ENCODE measurements at regions of chr13 and their contacts with region 1.

Region 1: DNA sequence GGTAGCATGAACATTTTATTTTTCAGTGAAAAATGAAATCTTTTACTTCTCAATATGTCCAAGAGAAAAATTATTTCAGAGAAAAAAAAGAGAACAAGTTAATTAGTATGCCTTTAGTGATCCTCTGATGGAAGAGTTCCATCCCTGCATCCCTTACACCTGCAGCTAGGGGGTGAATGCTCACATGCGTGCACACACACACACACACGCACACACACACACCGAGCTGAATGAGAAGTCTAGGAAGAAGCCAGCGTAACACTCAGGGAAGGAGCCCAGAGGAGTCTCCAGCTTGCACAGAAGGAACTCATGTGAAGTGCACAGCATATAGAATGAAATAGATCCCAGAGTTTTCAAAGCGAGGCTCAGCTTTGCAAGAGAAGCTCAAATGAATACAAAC is 510.5 kb downstream of the IRS2 start:
- DNase-seq: peak; percentile 41
- H3K4me3 Mint-ChIP-seq: no peak overlapping the region
- H3K27ac Mint-ChIP-seq: no peak overlapping the region
- H3K4me1 Mint-ChIP-seq: peaks cover 15% of the 10 kb centered on the region
- H3K27me3 Mint-ChIP-seq: no peaks in the 10 kb centered on the region
- CTCF ChIP-seq: no peak

Region 2: GRCh38 chr13:109058082-109058481 is 217.8 kb before region 1 on chr13:
- CTCF ChIA-PET with region 1: no interaction called
- POLR2A ChIA-PET with region 1: no interaction called
- intact Hi-C with region 1: no loop called
- DNase-seq: no peak
- H3K4me3 Mint-ChIP-seq: no peak overlapping the region
- H3K27ac Mint-ChIP-seq: no peak overlapping the region
- H3K4me1 Mint-ChIP-seq: no peaks in the 10 kb centered on the region
- H3K27me3 Mint-ChIP-seq: no peaks in the 10 kb centered on the region
- CTCF ChIP-seq: no peak

Region 3: GRCh38 chr13:109151255-109151654 is 124.6 kb before region 1 on chr13:
- CTCF ChIA-PET with region 1: interaction called, 4 read pairs
- POLR2A ChIA-PET with region 1: interaction called, 41 read pairs
- intact Hi-C with region 1: loop called (anchors 5 kb)
- DNase-seq: peak; percentile 49
- H3K4me3 Mint-ChIP-seq: no peak overlapping the region
- H3K27ac Mint-ChIP-seq: peak overlapping the region; percentile 77
- H3K4me1 Mint-ChIP-seq: peaks cover 57% of the 10 kb centered on the region
- H3K27me3 Mint-ChIP-seq: no peaks in the 10 kb centered on the region
- CTCF ChIP-seq: no peak

Region 4: GRCh38 chr13:109256866-109257760 is 18.7 kb before region 1 on chr13:
- CTCF ChIA-PET with region 1: interaction called, 3 read pairs
- POLR2A ChIA-PET with region 1: interaction called, 37 read pairs
- intact Hi-C with region 1: no loop called
- DNase-seq: peak; percentile 99
- H3K4me3 Mint-ChIP-seq: peak overlapping the region; percentile 48
- H3K27ac Mint-ChIP-seq: peak overlapping the region; percentile 96
- H3K4me1 Mint-ChIP-seq: peaks cover 47% of the 10 kb centered on the region
- H3K27me3 Mint-ChIP-seq: no peaks in the 10 kb centered on the region
- CTCF ChIP-seq: no peak

Region 5: GRCh38 chr13:109309625-109310363 is 33.9 kb after region 1 on chr13:
- CTCF ChIA-PET with region 1: no interaction called
- POLR2A ChIA-PET with region 1: no interaction called
- intact Hi-C with region 1: no loop called
- DNase-seq: no peak
- H3K4me3 Mint-ChIP-seq: no peak overlapping the region
- H3K27ac Mint-ChIP-seq: no peak overlapping the region
- H3K4me1 Mint-ChIP-seq: no peaks in the 10 kb centered on the region
- H3K27me3 Mint-ChIP-seq: no peaks in the 10 kb centered on the region
- CTCF ChIP-seq: no peak

Region 6: GRCh38 chr13:109778102-109778542 is 502.3 kb after region 1 on chr13:
- CTCF ChIA-PET with region 1: interaction called, 4 read pairs
- POLR2A ChIA-PET with region 1: interaction called, 42 read pairs
- intact Hi-C with region 1: loop called (anchors 2 kb)
- DNase-seq: peak; percentile 81
- H3K4me3 Mint-ChIP-seq: peak overlapping the region; percentile 84
- H3K27ac Mint-ChIP-seq: peak overlapping the region; percentile 70
- H3K4me1 Mint-ChIP-seq: peaks cover 54% of the 10 kb centered on the region
- H3K27me3 Mint-ChIP-seq: no peaks in the 10 kb centered on the region
- CTCF ChIP-seq: no peak